HEK293 (cell line): ENCODE measurements at regions of chr17 and their contacts with region 1.

Region 1: DNA sequence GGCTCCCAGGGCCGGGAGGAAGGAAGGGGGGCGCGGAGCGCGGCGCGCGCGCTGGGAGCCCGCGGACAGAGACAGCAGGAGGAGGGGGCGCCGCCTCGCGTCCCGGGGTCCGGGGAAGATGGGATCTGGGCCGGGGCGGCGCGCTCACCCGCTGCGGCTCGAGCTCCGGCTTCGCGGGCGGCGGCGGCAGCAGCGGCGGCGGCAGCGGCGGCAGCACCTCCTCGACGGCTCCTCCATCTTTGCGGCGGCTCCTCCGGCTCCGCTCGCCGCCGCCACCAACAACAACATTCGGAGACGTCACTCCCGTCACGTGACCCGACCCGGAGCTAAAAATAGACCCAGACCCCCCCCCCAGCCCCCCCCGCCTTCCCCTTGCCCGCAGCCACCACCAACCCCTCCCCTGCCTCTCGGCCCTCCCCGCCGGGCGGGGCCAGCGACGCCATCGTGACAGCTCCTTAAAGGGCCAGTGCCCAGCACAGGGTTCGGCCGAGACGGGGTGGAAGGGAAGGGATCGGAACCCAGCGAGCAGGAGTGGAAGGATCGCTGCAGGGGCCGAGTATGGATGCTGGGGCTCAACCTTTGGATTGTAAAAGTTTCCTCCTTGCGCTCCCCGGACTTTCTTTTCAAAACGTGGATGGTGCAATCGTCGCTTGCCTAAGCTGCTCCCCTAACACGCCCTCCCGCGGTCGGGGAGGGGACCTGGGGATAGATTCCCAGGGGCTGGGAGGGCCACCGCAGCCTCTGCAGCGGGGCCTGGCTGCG is at the start of gene HDAC5:
- H3K4me3 ChIP-seq: peak within 1 kb of the TSS; percentile 64
- H3K27ac ChIP-seq: peak within 1 kb of the TSS; percentile 88
- H3K4me1 ChIP-seq: no peaks in the 10 kb centered on the region; the same call in 1 of the 2 replicates
- CTCF ChIP-seq: peak; percentile 95

Region 2: DNA sequence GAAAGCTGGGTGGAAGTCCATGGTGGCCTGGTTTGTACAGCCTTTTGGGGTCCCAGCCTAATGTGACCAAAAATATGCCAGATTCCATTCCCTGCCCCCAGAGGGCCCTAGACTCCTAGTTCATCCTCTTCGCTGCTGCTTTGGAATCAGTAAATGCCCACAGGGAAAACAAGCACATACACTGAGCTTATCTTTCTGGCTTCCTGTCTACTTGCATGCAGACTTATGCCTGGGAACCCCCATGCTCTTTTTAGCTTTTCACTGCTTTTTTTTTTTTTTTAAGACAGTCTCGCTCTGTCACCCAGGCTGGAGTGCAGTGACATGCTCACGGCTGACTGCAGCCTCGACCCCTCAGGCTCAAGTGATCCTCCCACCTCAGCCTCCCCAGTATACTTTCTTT is 282.7 kb before region 1 on chr17:
- CTCF ChIA-PET with region 1: no interaction called
- POLR2A ChIA-PET with region 1: no interaction called
- H3K4me3 ChIP-seq: no peak overlapping the region
- H3K27ac ChIP-seq: no peak overlapping the region
- H3K4me1 ChIP-seq: peaks cover 14% of the 10 kb centered on the region
- CTCF ChIP-seq: no peak

Region 3: GRCh38 chr17:44070455-44071197 is 52.9 kb before region 1 on chr17 and contains the start of gene G6PC3:
- CTCF ChIA-PET with region 1: interaction called, 5 read pairs
- POLR2A ChIA-PET with region 1: interaction called, 20 read pairs
- H3K4me3 ChIP-seq: peak within 1 kb of the TSS; percentile 50
- H3K27ac ChIP-seq: peak within 1 kb of the TSS; percentile 97
- H3K4me1 ChIP-seq: peaks cover 12% of the 10 kb centered on the region
- CTCF ChIP-seq: peak; percentile 6

Region 4: GRCh38 chr17:44086364-44087311 is 36.9 kb before region 1 on chr17:
- CTCF ChIA-PET with region 1: interaction called, 98 read pairs
- POLR2A ChIA-PET with region 1: interaction called, 13 read pairs
- H3K4me3 ChIP-seq: no peak overlapping the region
- H3K27ac ChIP-seq: peak overlapping the region; percentile 25; the same call in 1 of the 2 replicates
- H3K4me1 ChIP-seq: peaks cover 10% of the 10 kb centered on the region
- CTCF ChIP-seq: no peak

Region 5: DNA sequence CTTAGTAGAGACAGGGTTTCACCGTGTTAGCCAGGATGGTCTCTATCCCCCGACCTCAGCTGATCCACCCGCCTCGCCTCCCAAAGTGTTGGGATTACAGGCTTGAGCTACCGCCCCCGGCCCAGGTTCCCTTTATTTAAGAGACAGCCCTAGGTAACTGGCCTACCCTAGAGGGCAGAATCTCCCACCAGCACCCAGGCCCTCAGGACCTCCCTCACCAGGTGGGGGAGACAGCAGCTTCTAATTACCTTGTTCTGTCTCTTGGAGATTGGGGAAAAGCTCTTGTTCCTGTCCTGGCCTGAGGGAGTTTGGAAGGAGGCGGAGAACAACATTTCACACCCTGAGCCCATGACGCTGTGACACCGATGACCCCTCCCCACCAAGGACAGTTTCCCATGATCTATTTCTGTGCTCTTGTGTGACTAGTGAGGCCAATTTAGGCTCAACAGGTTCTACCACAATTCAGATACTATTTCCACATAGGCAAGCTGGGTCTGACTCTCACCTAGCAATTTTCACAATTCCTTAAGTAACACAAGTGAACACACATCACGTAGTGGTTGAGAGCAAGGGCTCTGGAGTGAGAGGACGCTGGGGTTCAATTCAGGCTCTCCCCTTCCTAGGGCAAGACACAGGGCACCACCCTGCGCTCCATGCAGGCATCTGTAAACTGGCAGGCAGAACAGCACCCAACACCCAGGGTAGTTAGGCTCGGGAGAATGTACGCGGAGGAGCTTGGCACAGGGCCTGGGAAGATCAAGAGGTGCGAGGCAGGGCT is 20.5 kb before region 1 on chr17:
- CTCF ChIA-PET with region 1: interaction called, 12 read pairs
- POLR2A ChIA-PET with region 1: interaction called, 34 read pairs
- H3K4me3 ChIP-seq: no peak overlapping the region
- H3K27ac ChIP-seq: no peak overlapping the region
- H3K4me1 ChIP-seq: no peaks in the 10 kb centered on the region; the same call in 1 of the 2 replicates
- CTCF ChIP-seq: peak; percentile 50; the same call in 1 of the 2 replicates

Region 6: GRCh38 chr17:44110823-44111633 is 12.5 kb before region 1 on chr17:
- CTCF ChIA-PET with region 1: interaction called, 22 read pairs
- POLR2A ChIA-PET with region 1: interaction called, 34 read pairs
- H3K4me3 ChIP-seq: no peak overlapping the region
- H3K27ac ChIP-seq: peak overlapping the region; percentile 54; the same call in 1 of the 2 replicates
- H3K4me1 ChIP-seq: peaks cover 24% of the 10 kb centered on the region
- CTCF ChIP-seq: no peak

Region 7: GRCh38 chr17:44141717-44142285 is 18.3 kb after region 1 on chr17 and contains the start of gene HROB:
- CTCF ChIA-PET with region 1: interaction called, 5 read pairs
- POLR2A ChIA-PET with region 1: interaction called, 27 read pairs
- H3K4me3 ChIP-seq: peak within 1 kb of the TSS; percentile 98
- H3K27ac ChIP-seq: peak within 1 kb of the TSS; percentile 93
- H3K4me1 ChIP-seq: peaks cover 11% of the 10 kb centered on the region
- CTCF ChIP-seq: peak; percentile 98

Region 8: GRCh38 chr17:44186307-44187130 is 63.0 kb after region 1 on chr17 and contains the start of gene TMUB2:
- CTCF ChIA-PET with region 1: no interaction called
- POLR2A ChIA-PET with region 1: interaction called, 12 read pairs
- H3K4me3 ChIP-seq: peak within 1 kb of the TSS; percentile 77
- H3K27ac ChIP-seq: peak within 1 kb of the TSS; percentile 91
- H3K4me1 ChIP-seq: peaks cover 3% of the 10 kb centered on the region
- CTCF ChIP-seq: no peak

Region 9: DNA sequence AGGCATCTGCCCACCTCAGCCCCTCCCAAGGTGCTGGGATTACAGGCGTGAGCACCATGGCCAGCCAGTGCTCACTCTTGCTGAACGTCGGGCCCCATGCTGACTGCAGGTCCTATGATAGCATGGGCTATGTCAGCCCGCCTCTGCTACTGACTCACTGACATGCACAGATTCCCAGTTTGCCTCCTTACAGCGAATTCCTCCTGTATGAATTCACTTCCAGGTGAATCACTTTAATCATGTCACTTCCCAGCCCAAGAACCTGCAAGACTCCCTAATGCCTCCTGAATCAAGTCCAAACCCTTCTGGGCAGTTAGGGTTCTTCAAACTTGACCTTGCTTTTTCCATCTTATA is 112.0 kb after region 1 on chr17:
- CTCF ChIA-PET with region 1: no interaction called
- POLR2A ChIA-PET with region 1: no interaction called
- H3K4me3 ChIP-seq: no peak overlapping the region
- H3K27ac ChIP-seq: peak overlapping the region; percentile 53; the same call in 1 of the 2 replicates
- H3K4me1 ChIP-seq: peaks cover 10% of the 10 kb centered on the region
- CTCF ChIP-seq: no peak

Region 10: GRCh38 chr17:44424828-44425461 is 301.4 kb after region 1 on chr17:
- CTCF ChIA-PET with region 1: no interaction called
- POLR2A ChIA-PET with region 1: no interaction called
- H3K4me3 ChIP-seq: no peak overlapping the region
- H3K27ac ChIP-seq: no peak overlapping the region
- H3K4me1 ChIP-seq: no peaks in the 10 kb centered on the region
- CTCF ChIP-seq: no peak